ENCODE measurements at regions of chr2 and their contacts with region 1.

Region 1: GRCh38 chr2:236887531-236887930 is 198.2 kb upstream of the COPS8 start:
- DNase-seq: peak; percentile 90
- H3K4me3 ChIP-seq: no peak overlapping the region
- H3K27ac ChIP-seq: peak overlapping the region; percentile 98
- H3K4me1 ChIP-seq: peaks cover 35% of the 10 kb centered on the region
- H3K27me3 ChIP-seq: no peaks in the 10 kb centered on the region
- CTCF ChIP-seq: no peak
- POLR2A ChIP-seq: no peak

Region 2: DNA sequence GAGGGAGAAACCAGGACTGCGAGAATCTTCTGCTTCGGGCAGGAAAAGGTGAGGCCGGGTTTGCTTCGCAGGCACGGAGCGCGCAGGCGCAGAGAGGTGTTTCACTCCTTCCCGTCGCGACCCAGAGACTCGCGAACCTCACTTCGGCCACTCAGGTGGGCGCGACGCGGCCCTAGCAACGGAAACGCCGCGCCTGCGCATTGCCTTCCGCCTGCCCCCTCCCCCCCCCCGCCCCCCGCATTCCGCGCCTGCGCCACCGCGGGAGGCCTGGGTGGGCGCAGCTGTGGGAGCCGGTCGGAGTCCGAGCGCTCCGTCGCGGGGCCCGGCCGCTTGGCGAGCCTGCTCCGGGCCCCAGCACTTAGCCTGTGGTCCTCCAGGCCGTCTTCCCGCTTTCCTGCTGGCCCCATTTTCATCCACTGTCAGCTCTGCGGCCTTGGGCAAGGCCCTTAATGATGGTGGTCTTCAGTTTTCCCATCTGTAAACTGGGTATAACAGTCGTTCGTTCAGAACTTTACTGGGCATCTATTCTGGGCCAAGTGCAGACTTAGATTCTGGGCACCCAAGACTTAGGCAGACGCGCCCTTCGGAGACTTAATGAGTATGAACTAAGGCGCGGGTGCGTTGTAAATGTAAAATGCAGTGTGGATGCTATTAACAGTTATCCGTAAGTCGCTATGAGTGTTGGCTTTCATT is 380.0 kb before region 1 on chr2:
- CTCF ChIA-PET with region 1: no interaction called
- POLR2A ChIA-PET with region 1: no interaction called
- dilution Hi-C with region 1: no loop called
- intact Hi-C with region 1: loop called (anchors 5 kb)
- DNase-seq: peak; percentile 66
- H3K4me3 ChIP-seq: peak overlapping the region; percentile 40 to 75 (median 59)
- H3K27ac ChIP-seq: no peak overlapping the region
- H3K4me1 ChIP-seq: peaks cover 22% of the 10 kb centered on the region
- H3K27me3 ChIP-seq: peaks cover 4 to 9% of the 10 kb centered on the region in 2 experiments
- CTCF ChIP-seq: no peak
- POLR2A ChIP-seq: no peak

Region 3: DNA sequence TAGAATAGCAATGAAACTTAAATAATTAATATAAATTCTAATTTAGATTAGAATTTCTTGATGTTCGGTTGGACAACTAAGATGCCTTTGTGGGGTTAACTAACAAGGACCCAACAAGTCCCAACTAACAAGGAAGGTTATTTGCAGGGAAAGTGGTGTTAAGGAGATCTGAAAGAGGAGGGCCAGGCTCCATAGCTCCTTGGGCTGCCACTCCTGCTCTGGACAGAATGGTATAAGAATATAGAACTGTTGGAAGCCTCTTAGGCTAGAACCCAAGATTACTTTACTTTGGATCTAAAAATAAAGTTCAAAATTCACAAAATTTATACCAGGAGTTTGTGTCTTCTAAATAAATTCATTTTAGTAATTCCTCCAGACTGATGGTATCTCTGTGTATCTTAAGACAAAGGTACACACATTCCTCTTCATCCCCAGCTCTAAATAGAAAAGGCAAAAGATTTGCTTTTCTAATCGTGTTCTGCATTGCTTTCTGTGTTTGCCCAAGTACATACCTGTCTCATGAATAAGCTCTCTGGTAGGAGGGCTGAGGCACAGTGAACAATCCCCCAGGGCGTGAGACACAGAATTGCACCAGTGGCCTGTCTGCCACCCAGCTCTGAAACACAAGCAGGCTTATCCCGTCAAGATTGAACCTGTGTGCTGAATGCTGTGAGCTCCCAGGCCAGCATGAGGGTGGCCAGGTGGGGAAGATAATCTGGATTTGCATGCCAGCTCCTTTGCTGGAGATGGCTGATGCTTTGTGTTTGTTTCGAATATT is 141.9 kb before region 1 on chr2:
- CTCF ChIA-PET with region 1: interaction called, 3 read pairs
- POLR2A ChIA-PET with region 1: no interaction called
- dilution Hi-C with region 1: no loop called
- intact Hi-C with region 1: loop called (anchors 5 kb)
- DNase-seq: no peak
- H3K4me3 ChIP-seq: no peak overlapping the region
- H3K27ac ChIP-seq: no peak overlapping the region
- H3K4me1 ChIP-seq: peaks cover 15% of the 10 kb centered on the region
- H3K27me3 ChIP-seq: no peaks in the 10 kb centered on the region
- CTCF ChIP-seq: no peak
- POLR2A ChIP-seq: no peak

Region 4: DNA sequence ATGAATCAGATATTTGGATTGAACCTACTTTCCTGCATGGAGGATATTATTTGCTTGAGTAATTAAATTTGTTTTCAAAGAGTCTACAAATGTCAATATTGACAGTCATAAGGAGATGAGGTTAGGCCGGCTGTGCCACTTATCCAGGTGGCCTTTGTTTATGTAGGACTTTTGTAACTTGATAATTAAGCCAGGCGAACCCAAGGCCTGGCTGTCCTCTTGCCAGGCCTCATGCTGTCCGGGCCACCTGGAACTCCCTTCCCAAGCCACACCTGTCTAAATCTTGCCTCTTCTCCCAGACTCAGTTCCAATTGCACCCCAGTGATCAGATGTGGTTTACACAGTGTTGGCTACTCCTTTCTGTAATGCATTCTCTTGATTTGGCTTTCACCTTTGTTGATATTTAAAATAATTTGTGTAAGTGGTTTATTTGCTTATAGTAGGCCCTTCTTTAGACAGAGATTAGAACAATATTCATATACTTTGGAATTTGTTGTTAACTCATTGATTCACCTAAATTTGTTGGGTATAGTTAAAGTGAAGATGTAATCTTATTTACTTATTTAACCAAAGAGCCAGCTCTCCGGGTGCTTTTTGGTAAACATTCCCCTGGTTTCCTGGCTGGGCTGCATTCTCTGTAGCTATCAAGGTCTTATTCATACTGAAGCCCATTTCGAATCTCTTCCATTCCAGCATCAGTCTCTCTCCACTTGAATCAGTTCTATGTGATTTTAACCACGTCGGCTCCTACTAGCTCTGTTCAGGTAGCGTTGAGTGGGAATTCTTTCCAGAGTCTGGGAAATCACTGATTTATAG is 62.4 kb before region 1 on chr2:
- CTCF ChIA-PET with region 1: interaction called, 3 read pairs
- POLR2A ChIA-PET with region 1: no interaction called
- dilution Hi-C with region 1: loop called (anchors 5 kb)
- intact Hi-C with region 1: loop called (anchors 1 kb)
- DNase-seq: peak; percentile 18
- H3K4me3 ChIP-seq: no peak overlapping the region
- H3K27ac ChIP-seq: no peak overlapping the region
- H3K4me1 ChIP-seq: peaks cover 37% of the 10 kb centered on the region
- H3K27me3 ChIP-seq: no peaks in the 10 kb centered on the region
- CTCF ChIP-seq: no peak
- POLR2A ChIP-seq: no peak

Region 5: DNA sequence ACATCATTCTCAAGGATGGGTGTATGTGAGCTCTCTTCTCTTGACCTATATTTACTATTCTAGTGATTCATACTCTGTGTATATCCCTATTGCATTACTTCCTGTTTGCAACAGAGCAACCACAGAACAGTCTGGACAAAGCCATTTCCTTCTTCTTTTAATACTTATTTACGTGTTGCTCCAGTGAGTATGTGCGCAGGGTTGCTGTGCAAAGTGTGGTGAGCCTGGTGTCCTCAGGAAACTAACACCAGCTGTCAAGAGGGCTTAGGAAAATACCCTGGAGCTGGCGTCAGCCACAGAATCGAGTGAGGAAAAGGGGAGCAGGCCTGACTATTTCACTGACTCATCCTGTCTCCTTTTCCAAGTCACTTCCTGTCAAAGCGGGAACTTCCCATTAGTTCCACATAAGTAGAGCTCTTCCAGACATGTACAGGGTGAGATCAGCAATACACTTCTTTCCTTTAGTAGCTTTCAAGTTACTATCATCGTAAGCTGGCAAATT is 16.0 kb before region 1 on chr2:
- CTCF ChIA-PET with region 1: interaction called, 3 read pairs
- POLR2A ChIA-PET with region 1: interaction called, 5 read pairs
- dilution Hi-C with region 1: no loop called
- intact Hi-C with region 1: loop called (anchors 1 kb)
- DNase-seq: peak; percentile 96
- H3K4me3 ChIP-seq: no peak overlapping the region
- H3K27ac ChIP-seq: peak overlapping the region; percentile 92
- H3K4me1 ChIP-seq: peaks cover 35% of the 10 kb centered on the region
- H3K27me3 ChIP-seq: no peaks in the 10 kb centered on the region
- CTCF ChIP-seq: no peak
- POLR2A ChIP-seq: no peak

Region 6: DNA sequence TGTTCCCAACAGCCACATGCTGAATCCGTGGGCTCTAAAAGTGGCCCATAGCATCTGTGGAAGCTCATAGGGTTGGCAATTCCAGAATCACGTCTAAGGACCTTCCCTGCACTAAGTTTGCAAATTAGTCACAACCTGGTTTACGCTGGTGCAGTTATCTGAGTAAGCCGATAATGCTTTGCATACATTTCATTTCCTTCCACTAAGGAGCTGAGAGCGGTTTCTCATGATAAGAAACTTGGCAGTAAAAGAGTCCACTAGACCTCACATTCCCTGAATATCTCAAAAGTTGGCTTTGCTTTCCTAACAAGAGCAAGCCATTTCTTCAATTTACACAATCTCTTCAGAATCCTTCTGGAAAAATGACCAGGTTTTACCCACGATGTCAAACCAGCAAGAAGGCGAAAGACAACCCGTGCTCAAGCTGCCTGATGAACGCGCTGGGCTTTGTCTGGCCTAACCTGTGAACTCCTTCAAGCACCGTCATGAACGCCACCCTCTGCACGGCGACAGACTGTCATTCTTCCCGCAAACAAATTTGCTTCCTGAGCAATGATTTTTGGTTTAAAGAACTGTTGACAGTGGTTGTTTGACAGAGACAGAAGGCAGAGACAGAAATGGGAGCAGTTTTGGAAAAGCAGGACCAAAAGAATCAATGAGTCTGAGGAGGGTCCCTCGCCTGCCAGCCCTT is 125.2 kb after region 1 on chr2:
- CTCF ChIA-PET with region 1: no interaction called
- POLR2A ChIA-PET with region 1: no interaction called
- dilution Hi-C with region 1: no loop called
- intact Hi-C with region 1: loop called (anchors 1 kb)
- DNase-seq: peak; percentile 96
- H3K4me3 ChIP-seq: no peak overlapping the region
- H3K27ac ChIP-seq: peak overlapping the region; percentile 54
- H3K4me1 ChIP-seq: peaks cover 24% of the 10 kb centered on the region
- H3K27me3 ChIP-seq: no peaks in the 10 kb centered on the region
- CTCF ChIP-seq: no peak
- POLR2A ChIP-seq: no peak